Natural killer cell (primary cell): ENCODE measurements at regions of chr6 and their contacts with region 1.

Region 1: GRCh38 chr6:40845553-40845952 is 193.5 kb downstream of the UNC5CL start:
- DNase-seq: peak in 1 of 2 donors; percentile 50
- ATAC-seq: no peak
- H3K4me3 ChIP-seq: no peak overlapping the region
- H3K4me3 Mint-ChIP-seq: no peak overlapping the region
- H3K27ac ChIP-seq: no peak overlapping the region
- H3K27ac Mint-ChIP-seq: no peak overlapping the region
- H3K4me1 ChIP-seq: no peaks in the 10 kb centered on the region
- H3K4me1 Mint-ChIP-seq: no peaks in the 10 kb centered on the region
- H3K27me3 ChIP-seq: no peaks in the 10 kb centered on the region
- H3K27me3 Mint-ChIP-seq: peaks cover 28 to 64% of the 10 kb centered on the region in 2 donors
- CTCF ChIP-seq: peak; percentile 29

Region 2: GRCh38 chr6:39114704-39115599 is 1730.6 kb before region 1 on chr6 and contains the start of gene SAYSD1:
- intact Hi-C with region 1: no loop called
- DNase-seq: peak; percentile 92 to 98
- ATAC-seq: peak; percentile 87 to 94 (median 90)
- H3K4me3 ChIP-seq: peak within 1 kb of the TSS; percentile 92
- H3K4me3 Mint-ChIP-seq: peak within 1 kb of the TSS; percentile 96
- H3K27ac ChIP-seq: peak within 1 kb of the TSS; percentile 96
- H3K27ac Mint-ChIP-seq: peak within 1 kb of the TSS; percentile 91 to 98
- H3K4me1 ChIP-seq: peaks cover 6% of the 10 kb centered on the region
- H3K4me1 Mint-ChIP-seq: peaks cover 21 to 29% of the 10 kb centered on the region in 2 donors
- H3K27me3 ChIP-seq: no peaks in the 10 kb centered on the region
- H3K27me3 Mint-ChIP-seq: no peaks in the 10 kb centered on the region
- CTCF ChIP-seq: no peak
- total RNA-seq, gene SAYSD1: 11.3 to 13.1 (median 11.5) TPM

Region 3: DNA sequence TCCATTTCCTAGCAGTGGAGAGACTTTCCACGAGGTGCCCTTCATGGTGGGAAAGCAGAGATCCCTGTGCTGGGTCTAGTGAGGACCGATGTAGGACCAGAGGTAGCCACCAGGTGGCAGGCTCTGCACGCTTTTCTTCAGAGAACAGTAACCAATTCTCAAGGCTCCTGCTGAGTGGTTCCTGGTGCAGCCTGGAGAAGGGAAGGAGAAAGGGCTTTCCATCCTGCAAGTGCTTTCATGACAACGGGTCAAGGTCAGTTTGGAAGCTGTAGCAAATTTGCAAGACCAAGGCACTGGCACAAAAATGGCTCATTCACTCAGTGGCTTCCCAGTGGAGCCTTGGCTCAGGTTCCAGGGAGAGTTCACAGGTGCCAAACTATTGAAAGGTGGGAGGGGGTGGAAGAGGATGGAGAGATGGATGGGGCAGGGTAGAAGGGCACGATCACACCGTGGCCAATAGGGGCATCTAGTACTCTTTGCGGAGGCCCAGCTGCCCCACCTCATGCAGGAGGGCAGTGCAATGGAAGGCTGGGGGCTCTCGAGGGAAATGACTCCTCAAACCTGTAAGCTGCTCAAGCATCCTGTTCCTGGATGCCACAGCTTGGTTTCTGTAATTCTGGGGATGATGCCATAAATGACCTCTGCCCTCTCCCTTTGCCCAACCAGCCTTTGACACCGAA is 1497.5 kb before region 1 on chr6:
- intact Hi-C with region 1: loop called (anchors 5 kb)
- DNase-seq: peak; percentile 50 to 66
- ATAC-seq: peak; percentile 65 to 84 (median 81)
- H3K4me3 ChIP-seq: no peak overlapping the region
- H3K4me3 Mint-ChIP-seq: no peak overlapping the region
- H3K27ac ChIP-seq: no peak overlapping the region
- H3K27ac Mint-ChIP-seq: peak overlapping the region in 1 of 2 donors; percentile 53
- H3K4me1 ChIP-seq: peaks cover 7% of the 10 kb centered on the region
- H3K4me1 Mint-ChIP-seq: peaks cover 0 to 10% of the 10 kb centered on the region in 2 donors
- H3K27me3 ChIP-seq: no peaks in the 10 kb centered on the region
- H3K27me3 Mint-ChIP-seq: no peaks in the 10 kb centered on the region
- CTCF ChIP-seq: peak; percentile 88

Region 4: GRCh38 chr6:39980839-39981580 is 864.5 kb before region 1 on chr6:
- intact Hi-C with region 1: loop called (anchors 10 kb)
- DNase-seq: peak in 1 of 2 donors; percentile 34
- ATAC-seq: no peak
- H3K4me3 ChIP-seq: no peak overlapping the region
- H3K4me3 Mint-ChIP-seq: no peak overlapping the region
- H3K27ac ChIP-seq: no peak overlapping the region
- H3K27ac Mint-ChIP-seq: no peak overlapping the region
- H3K4me1 ChIP-seq: no peaks in the 10 kb centered on the region
- H3K4me1 Mint-ChIP-seq: no peaks in the 10 kb centered on the region
- H3K27me3 ChIP-seq: no peaks in the 10 kb centered on the region
- H3K27me3 Mint-ChIP-seq: peaks cover 20 to 75% of the 10 kb centered on the region in 2 donors
- CTCF ChIP-seq: no peak

Region 5: DNA sequence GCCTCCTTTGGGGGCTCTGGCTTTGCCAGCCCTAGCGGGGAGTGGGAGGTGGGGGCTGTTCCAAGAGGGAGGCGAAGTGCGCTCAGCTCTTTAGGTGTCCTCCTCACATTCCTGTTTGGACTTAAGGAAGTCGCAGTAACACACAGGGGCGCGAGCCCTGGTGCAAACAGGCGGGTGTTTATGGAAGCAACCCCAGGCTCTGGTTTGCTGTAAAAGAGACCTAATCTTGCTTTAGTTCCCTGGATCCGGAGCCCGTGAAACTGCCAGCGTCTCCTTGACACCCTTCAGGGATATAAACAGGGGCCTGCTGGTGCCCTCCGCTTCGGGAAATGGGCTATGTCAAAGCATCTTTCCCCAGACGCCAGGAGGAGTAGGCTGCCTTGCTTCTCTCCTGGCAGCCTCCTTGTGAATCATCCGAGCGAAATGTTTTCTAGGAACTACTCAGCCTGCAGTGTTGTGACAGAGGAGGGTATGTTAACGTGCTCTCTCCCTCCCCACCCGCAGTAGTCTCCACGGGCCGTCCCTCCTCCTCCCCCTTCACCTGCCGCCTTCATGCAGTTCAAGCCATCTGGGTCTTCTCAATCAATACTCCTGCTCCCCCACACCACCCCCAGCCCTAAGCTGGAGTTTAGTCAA is 90.4 kb before region 1 on chr6:
- intact Hi-C with region 1: no loop called
- DNase-seq: no peak
- ATAC-seq: no peak
- H3K4me3 ChIP-seq: no peak overlapping the region
- H3K4me3 Mint-ChIP-seq: no peak overlapping the region
- H3K27ac ChIP-seq: no peak overlapping the region
- H3K27ac Mint-ChIP-seq: no peak overlapping the region
- H3K4me1 ChIP-seq: no peaks in the 10 kb centered on the region
- H3K4me1 Mint-ChIP-seq: no peaks in the 10 kb centered on the region
- H3K27me3 ChIP-seq: peaks cover 9% of the 10 kb centered on the region
- H3K27me3 Mint-ChIP-seq: peaks cover 41 to 57% of the 10 kb centered on the region in 2 donors
- CTCF ChIP-seq: no peak

Region 6: DNA sequence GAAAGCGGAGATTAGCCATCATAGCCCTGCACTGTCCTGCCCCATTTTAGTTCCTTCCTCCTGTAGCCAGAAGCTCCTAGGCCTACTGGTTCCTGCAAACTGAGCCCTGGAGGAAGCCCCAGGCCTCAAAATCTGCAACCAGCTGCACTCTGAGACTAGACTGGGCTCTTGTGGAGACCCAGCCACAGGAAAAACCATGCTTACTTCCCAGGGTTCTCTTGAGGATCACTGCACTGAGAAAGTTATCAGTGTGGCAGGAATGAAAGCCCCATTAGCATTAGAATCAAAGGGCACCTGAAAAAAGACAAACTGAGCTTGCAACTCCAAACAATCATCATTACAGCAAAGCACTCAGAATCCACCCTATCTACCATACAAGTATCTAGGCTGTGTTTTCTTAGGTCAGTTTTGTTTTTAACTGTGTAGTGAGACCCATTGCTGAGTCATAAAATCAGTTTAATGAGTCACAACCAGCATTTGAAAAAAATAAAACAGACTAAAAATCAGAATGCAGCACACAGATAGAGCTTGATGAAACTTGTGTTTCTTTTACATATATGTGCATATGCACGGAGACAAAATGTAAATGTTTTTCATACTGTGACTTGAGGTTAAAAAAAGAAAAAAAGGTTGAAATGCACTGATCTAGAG is 102.4 kb after region 1 on chr6:
- intact Hi-C with region 1: no loop called
- DNase-seq: no peak
- ATAC-seq: no peak
- H3K4me3 ChIP-seq: no peak overlapping the region
- H3K4me3 Mint-ChIP-seq: no peak overlapping the region
- H3K27ac ChIP-seq: no peak overlapping the region
- H3K27ac Mint-ChIP-seq: no peak overlapping the region
- H3K4me1 ChIP-seq: no peaks in the 10 kb centered on the region
- H3K4me1 Mint-ChIP-seq: no peaks in the 10 kb centered on the region
- H3K27me3 ChIP-seq: peaks cover 5% of the 10 kb centered on the region
- H3K27me3 Mint-ChIP-seq: peaks cover 12 to 13% of the 10 kb centered on the region in 2 donors
- CTCF ChIP-seq: no peak

Region 7: DNA sequence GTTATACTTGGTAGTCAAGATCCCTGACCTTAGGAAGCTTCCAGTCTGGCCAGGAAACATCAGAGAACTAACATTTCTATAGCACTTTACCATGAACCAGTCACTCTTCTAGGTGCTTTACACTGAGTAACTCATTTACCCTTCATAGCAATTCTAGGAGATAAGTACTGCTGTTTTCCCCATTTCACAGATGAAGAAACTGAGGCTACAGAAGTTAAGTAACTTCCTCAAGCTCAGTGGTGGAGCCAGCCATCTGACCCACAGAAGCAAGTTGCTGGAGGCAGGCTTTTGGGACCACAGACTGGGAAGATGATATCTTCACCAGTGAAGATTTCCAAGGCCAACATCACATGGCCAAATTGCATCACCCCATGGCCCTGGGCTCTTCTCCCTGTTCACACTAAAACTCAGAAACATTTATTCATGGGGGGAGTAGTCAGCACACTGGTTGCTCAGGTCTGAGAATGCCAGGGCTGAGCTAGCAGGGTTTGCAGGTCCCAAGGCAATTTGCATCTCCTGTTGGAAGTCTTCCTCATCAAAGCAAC is 123.1 kb after region 1 on chr6:
- intact Hi-C with region 1: no loop called
- DNase-seq: no peak
- ATAC-seq: no peak
- H3K4me3 ChIP-seq: no peak overlapping the region
- H3K4me3 Mint-ChIP-seq: no peak overlapping the region
- H3K27ac ChIP-seq: no peak overlapping the region
- H3K27ac Mint-ChIP-seq: no peak overlapping the region
- H3K4me1 ChIP-seq: no peaks in the 10 kb centered on the region
- H3K4me1 Mint-ChIP-seq: no peaks in the 10 kb centered on the region
- H3K27me3 ChIP-seq: peaks cover 3% of the 10 kb centered on the region
- H3K27me3 Mint-ChIP-seq: peaks cover 20 to 41% of the 10 kb centered on the region in 2 donors
- CTCF ChIP-seq: no peak